ENCODE measurements at regions of chr1 and their contacts with region 1.

Region 1: GRCh38 chr1:230818367-230818766 is 50.0 kb downstream of the C1orf198 start:
- DNase-seq: no peak
- ATAC-seq: no peak
- H3K4me3 ChIP-seq: no peak overlapping the region
- H3K27ac ChIP-seq: no peak overlapping the region
- H3K4me1 ChIP-seq: no peaks in the 10 kb centered on the region
- H3K27me3 ChIP-seq: no peaks in the 10 kb centered on the region
- CTCF ChIP-seq: no peak

Region 2: GRCh38 chr1:230682882-230683610 is 135.3 kb before region 1 on chr1:
- intact Hi-C with region 1: no loop called
- DNase-seq: no peak
- ATAC-seq: no peak
- H3K4me3 ChIP-seq: no peak overlapping the region
- H3K27ac ChIP-seq: no peak overlapping the region
- H3K4me1 ChIP-seq: peaks cover 8% of the 10 kb centered on the region
- H3K27me3 ChIP-seq: no peaks in the 10 kb centered on the region
- CTCF ChIP-seq: no peak

Region 3: DNA sequence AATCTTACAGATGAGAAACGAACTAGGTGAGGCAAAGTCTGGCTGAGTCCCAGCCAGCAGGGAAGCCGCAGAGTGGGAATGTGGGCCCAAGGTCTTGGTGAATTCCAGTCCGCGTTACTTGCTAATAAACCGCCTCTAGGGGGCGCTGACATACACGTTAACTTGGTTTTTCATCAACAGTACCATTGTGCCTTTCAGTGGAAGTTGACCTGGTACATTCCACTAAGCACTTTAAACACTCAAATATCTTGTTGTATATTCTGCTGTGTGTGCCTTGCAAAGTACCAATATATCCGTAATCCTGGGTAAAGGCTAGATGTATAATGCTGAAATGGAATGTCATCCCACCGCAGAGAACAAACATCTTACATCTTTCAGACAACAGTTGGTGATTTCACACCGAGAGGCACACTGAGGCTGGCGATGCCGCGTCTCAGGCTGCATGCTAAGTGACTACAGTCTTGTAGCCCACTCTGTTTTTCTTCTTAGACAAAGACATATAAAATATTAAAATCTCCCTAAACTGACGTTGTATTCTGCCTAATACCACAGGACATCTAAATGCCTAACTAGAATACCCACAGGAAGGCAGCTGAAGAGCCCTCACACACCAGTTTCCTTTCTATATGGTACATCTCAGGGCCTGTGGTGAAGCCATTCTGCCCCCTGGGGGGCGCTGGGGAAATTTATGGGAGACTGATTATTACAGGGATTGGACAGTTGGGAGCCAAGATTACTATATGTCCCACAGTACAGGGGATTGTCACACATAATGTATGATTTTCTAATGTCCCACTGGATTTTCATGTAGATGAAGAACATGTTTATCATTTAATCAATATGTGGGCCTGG is 99.1 kb after region 1 on chr1:
- intact Hi-C with region 1: loop called (anchors 10 kb)
- DNase-seq: peak; percentile 80
- ATAC-seq: peak; percentile 88 to 91
- H3K4me3 ChIP-seq: no peak overlapping the region
- H3K27ac ChIP-seq: no peak overlapping the region
- H3K4me1 ChIP-seq: peaks cover 5% of the 10 kb centered on the region
- H3K27me3 ChIP-seq: no peaks in the 10 kb centered on the region
- CTCF ChIP-seq: peak; percentile 73